ENCODE measurements at regions of chr22 and their contacts with region 1.

Region 1: GRCh38 chr22:30005213-30005857 is 74.9 kb upstream of the HORMAD2 start:
- DNase-seq: peak; percentile 78
- H3K4me3 Mint-ChIP-seq: no peak overlapping the region
- H3K27ac Mint-ChIP-seq: no peak overlapping the region
- H3K4me1 Mint-ChIP-seq: peaks cover 7% of the 10 kb centered on the region
- H3K27me3 Mint-ChIP-seq: no peaks in the 10 kb centered on the region

Region 2: DNA sequence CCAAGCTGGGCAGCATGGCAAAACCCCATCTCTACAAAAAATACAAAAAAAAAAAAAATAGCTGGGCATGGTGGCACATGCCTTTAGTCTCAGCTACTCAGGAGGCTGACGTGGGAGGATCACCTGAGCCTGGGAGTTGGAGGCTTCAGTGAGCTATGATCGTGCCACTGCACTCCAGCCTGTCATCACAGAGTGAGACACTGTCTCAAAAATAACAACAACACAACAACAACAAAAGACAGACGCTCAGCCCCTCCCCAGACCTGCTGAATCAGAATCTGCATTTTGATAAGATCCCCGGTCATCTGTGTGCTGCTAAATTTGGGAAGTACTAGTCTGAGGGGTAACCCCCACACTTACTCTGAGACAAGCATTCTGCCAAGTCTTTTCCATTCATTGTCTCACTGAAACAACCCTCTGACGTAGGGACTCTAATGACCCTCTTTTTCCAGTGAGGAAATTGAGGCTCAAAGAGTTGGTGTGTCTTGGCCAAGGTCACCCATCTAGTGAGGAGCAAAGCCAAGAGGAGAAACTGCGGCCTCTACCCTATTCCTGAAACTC is 517.8 kb before region 1 on chr22:
- CTCF ChIA-PET with region 1: no interaction called
- POLR2A ChIA-PET with region 1: no interaction called
- intact Hi-C with region 1: no loop called
- DNase-seq: no peak
- H3K4me3 Mint-ChIP-seq: no peak overlapping the region
- H3K27ac Mint-ChIP-seq: no peak overlapping the region
- H3K4me1 Mint-ChIP-seq: no peaks in the 10 kb centered on the region
- H3K27me3 Mint-ChIP-seq: no peaks in the 10 kb centered on the region

Region 3: DNA sequence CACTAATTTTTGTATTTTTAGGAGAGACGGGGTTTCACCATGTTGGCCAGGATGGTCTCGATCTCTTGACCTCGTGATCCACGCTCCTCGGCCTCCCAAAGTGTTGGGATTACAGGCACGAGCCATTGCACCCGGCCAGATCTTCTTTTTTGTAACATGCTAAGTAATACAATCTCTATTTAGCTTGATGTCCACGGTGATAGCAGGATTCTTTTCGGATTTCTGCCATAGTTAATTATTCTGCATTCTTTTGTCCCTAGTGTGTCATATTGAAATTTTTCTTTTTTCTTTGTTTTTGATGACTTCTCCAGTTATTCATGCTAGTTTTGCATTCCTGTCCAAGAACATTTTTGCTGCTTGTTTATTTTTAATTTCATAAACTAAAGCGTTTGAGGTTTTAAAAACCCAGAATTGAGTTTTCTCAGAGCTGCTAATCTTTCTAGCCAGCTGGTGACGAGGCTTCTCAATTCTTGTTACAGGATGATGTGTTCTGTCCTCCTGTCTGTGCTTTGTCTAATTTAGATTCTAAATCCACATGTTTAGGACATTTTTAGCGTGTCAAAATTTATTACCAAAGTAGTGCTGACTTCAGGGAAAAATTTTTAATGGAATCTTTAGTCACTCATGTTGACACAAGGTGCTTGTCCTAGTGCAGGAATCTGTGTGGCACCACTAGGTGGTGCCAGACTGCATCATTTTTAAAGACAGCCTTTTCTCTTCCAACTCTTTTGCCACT is 380.1 kb before region 1 on chr22:
- CTCF ChIA-PET with region 1: interaction called, 19 read pairs
- POLR2A ChIA-PET with region 1: no interaction called
- intact Hi-C with region 1: no loop called
- DNase-seq: peak; percentile 57
- H3K4me3 Mint-ChIP-seq: no peak overlapping the region
- H3K27ac Mint-ChIP-seq: no peak overlapping the region
- H3K4me1 Mint-ChIP-seq: peaks cover 57% of the 10 kb centered on the region
- H3K27me3 Mint-ChIP-seq: no peaks in the 10 kb centered on the region

Region 4: DNA sequence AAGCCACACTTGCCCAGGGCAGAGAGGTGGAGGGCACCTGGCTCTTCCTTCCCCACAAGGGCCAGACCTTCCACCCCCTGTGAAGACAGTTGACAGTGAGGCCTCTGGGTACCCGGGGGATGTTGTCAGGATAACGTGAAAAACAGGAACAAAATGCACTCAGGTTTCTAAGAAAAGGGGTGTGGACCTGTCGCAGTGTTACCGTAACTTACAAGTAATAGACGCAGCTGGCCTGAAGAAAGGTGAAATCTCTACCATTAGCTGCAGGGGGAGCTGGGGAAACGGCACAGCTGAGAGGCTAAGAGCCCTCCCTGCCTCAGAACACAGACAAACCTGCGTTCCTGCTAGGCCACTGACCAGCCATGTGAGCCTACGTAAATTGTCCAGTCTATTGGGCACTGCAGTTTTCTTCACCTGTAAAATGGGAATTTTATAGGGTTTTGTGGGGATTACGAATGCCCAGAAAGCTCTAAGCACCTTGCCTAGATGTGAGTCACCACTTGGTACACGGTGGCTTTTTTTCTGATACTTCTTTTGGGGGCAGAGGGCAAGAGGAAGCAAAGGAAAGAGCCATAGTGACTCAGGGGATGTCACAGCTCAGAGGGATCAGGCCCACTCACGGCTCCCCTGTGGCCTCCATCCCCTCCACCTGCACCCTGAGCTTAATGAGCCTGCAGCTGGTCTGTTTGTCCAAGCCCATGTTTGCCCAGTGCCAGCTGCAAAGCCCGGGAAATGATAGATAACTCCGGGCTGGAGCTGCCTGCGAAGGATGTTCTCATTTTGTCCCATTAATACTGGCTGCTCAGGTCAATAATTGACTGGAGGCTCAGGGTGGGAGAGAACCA is 304.0 kb before region 1 on chr22:
- CTCF ChIA-PET with region 1: interaction called, 16 read pairs
- POLR2A ChIA-PET with region 1: no interaction called
- intact Hi-C with region 1: no loop called
- DNase-seq: peak; percentile 32
- H3K4me3 Mint-ChIP-seq: no peak overlapping the region
- H3K27ac Mint-ChIP-seq: no peak overlapping the region
- H3K4me1 Mint-ChIP-seq: peaks cover 9% of the 10 kb centered on the region
- H3K27me3 Mint-ChIP-seq: peaks cover 4% of the 10 kb centered on the region

Region 5: GRCh38 chr22:29820961-29821789 is 184.2 kb before region 1 on chr22:
- CTCF ChIA-PET with region 1: interaction called, 5 read pairs
- POLR2A ChIA-PET with region 1: no interaction called
- intact Hi-C with region 1: loop called (anchors 5 kb)
- DNase-seq: peak; percentile 69
- H3K4me3 Mint-ChIP-seq: no peak overlapping the region
- H3K27ac Mint-ChIP-seq: peak overlapping the region; percentile 84
- H3K4me1 Mint-ChIP-seq: peaks cover 8% of the 10 kb centered on the region
- H3K27me3 Mint-ChIP-seq: no peaks in the 10 kb centered on the region

Region 6: DNA sequence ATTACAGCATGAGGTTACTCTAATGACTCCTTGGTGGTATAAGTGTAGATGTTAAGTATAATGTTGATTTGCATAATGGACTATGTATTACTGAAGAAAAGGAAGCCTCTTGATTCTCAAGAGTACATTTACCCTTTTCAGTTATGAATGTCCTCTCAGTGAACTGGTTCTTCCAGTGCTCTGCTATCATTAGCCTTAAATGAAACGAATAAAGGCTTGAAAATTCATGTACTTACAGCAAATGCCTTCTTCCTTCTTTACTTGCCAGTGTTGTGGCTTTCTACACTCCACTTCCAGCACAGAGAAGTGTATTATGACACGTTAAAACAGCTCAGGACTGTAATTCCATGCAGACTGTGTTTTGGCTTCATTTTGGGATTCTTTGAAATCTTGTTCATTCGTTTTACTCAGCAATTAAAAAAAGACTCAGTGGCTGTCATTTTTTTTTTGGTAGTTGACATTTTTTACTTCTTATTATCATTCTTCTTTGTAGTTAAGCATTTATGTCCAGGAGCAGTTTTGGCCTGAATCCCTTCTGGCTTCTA is 25.5 kb before region 1 on chr22:
- CTCF ChIA-PET with region 1: interaction called, 12 read pairs
- POLR2A ChIA-PET with region 1: no interaction called
- intact Hi-C with region 1: no loop called
- DNase-seq: no peak
- H3K4me3 Mint-ChIP-seq: no peak overlapping the region
- H3K27ac Mint-ChIP-seq: no peak overlapping the region
- H3K4me1 Mint-ChIP-seq: no peaks in the 10 kb centered on the region
- H3K27me3 Mint-ChIP-seq: no peaks in the 10 kb centered on the region

Region 7: GRCh38 chr22:30089655-30089974 is 84.3 kb after region 1 on chr22:
- CTCF ChIA-PET with region 1: interaction called, 14 read pairs
- POLR2A ChIA-PET with region 1: no interaction called
- intact Hi-C with region 1: loop called (anchors 1 kb)
- DNase-seq: no peak
- H3K4me3 Mint-ChIP-seq: no peak overlapping the region
- H3K27ac Mint-ChIP-seq: no peak overlapping the region
- H3K4me1 Mint-ChIP-seq: peaks cover 7% of the 10 kb centered on the region
- H3K27me3 Mint-ChIP-seq: no peaks in the 10 kb centered on the region